ENCODE measurements at regions of chr9 and their contacts with region 1.

Region 1: DNA sequence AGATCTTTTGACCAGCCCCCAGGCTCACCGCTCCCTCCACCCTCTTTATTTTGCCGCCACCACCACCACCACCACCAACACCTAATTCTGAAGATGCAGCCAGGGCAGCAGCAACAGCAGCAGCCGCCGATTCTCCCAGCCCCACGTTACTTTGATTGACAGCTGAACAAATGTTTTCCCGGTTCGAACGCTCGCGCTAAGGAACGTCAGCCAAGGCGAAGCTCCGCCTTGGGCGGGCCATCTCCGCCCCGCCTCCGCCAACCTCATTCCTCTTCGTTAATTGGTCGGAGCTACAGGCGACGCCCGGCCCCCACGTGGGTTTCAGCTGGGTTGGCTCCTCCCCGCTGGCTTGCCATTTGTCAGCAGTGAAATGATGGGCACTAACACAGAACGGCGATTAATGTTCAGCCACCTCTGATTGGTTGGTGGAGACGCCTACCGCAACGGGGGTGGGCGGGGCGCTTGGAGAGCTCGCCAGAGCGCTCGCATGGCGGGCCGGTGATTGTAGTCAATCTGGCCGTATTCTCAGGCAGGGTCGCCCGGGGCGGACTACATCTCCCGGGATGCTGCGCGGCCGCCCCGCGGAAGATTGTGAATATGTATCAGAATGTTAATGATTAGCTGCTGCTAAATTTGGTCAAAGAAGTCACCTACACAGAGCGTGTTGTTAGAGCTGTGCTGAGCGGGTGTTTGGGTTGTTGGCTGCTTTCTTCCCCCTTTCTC is at the start of gene TLE4:
- DNase-seq: peak; percentile 100
- H3K4me3 ChIP-seq: peak within 1 kb of the TSS; percentile 93 to 98 (median 98)
- H3K4me3 Mint-ChIP-seq: peak within 1 kb of the TSS; percentile 76 to 91
- H3K27ac ChIP-seq: peak within 1 kb of the TSS; percentile 82 to 92
- H3K27ac Mint-ChIP-seq: peak within 1 kb of the TSS in 5 of 7 donors; percentile 76 to 87 (median 83)
- H3K4me1 ChIP-seq: peaks cover 50 to 55% of the 10 kb centered on the region in 2 donors
- H3K4me1 Mint-ChIP-seq: peaks cover 53% of the 10 kb centered on the region
- H3K27me3 ChIP-seq: peaks cover 0 to 4% of the 10 kb centered on the region in 2 donors
- H3K27me3 Mint-ChIP-seq: peaks cover 0 to 13% (median 11%) of the 10 kb centered on the region in 3 donors
- CTCF ChIP-seq: no peak
- polyA plus RNA-seq, gene TLE4: 21.0 to 107 (median 21.7) TPM

Region 2: DNA sequence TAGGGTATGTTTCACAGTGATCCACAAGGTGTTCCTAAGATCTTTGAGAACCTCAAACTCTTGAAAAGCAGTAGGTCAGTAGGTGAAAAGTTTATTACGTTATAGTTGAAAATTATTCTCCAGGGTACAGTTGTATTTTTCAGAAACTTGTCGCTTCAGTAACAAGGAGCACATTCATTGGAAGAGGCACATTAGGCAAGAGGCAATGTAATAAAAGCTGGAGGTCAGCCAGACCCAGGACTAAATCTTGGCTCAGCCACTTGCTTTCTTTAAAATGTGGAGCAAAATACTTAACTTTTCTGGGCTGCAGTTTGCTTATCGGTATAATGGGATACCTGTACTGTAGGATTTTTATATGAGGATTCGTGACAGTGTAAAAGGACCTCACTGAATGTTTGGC is 45.9 kb after region 1 on chr9:
- intact Hi-C with region 1: loop called in 1 of 2 experiments (anchors 5 kb)
- DNase-seq: no peak
- H3K4me3 ChIP-seq: no peak overlapping the region
- H3K4me3 Mint-ChIP-seq: no peak overlapping the region
- H3K27ac ChIP-seq: peak overlapping the region in 1 of 2 donors; percentile 29
- H3K27ac Mint-ChIP-seq: peak overlapping the region in 3 of 7 donors; percentile 31 to 74 (median 59)
- H3K4me1 ChIP-seq: peaks cover 53 to 61% of the 10 kb centered on the region in 2 donors
- H3K4me1 Mint-ChIP-seq: peaks cover 66% of the 10 kb centered on the region
- H3K27me3 ChIP-seq: no peaks in the 10 kb centered on the region
- H3K27me3 Mint-ChIP-seq: peaks cover 0 to 1% (median 0%) of the 10 kb centered on the region in 3 donors
- CTCF ChIP-seq: no peak

Region 3: GRCh38 chr9:79623799-79624721 is 52.6 kb after region 1 on chr9:
- intact Hi-C with region 1: loop called (anchors 2 to 5 kb)
- DNase-seq: peak; percentile 87 to 94 (median 90)
- H3K4me3 ChIP-seq: peak overlapping the region in 2 of 3 experiments; percentile 20 to 64
- H3K4me3 Mint-ChIP-seq: peak overlapping the region; percentile 56 to 75
- H3K27ac ChIP-seq: peak overlapping the region; percentile 66 to 88
- H3K27ac Mint-ChIP-seq: peak overlapping the region; percentile 91 to 99 (median 97)
- H3K4me1 ChIP-seq: peaks cover 32 to 51% of the 10 kb centered on the region in 2 donors
- H3K4me1 Mint-ChIP-seq: peaks cover 52% of the 10 kb centered on the region
- H3K27me3 ChIP-seq: no peaks in the 10 kb centered on the region
- H3K27me3 Mint-ChIP-seq: no peaks in the 10 kb centered on the region
- CTCF ChIP-seq: no peak

Region 4: DNA sequence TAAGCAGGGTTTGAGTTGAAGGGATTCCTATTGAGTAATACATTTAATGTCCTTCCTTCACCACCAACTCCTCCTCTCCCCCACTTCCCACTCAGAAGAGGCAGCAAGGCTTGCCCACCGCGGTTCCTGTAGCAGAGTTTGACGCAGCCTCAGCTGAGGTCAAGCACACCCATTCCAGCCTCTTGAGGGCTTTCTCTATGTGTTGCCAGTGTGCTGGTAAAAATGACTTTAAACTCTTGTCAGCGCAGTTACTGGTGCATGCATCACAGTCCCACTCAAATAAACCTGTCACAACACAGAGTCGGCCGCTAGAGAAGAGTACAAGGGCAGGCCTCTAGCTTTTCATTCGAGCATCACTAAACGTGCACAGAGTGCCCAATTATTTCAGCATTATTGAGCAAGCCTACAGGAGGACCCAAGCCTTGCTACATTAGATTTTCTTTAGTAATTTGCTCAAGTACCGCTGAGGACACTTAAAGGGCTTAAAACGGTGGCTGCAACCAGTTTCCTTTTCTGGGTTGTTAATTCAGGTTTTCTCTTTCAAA is 79.9 kb after region 1 on chr9:
- intact Hi-C with region 1: loop called in 1 of 2 experiments (anchors 5 kb)
- DNase-seq: peak; percentile 61 to 70 (median 69)
- H3K4me3 ChIP-seq: peak overlapping the region in 1 of 3 experiments; percentile 43
- H3K4me3 Mint-ChIP-seq: peak overlapping the region; percentile 56 to 75
- H3K27ac ChIP-seq: peak overlapping the region; percentile 56 to 71
- H3K27ac Mint-ChIP-seq: peak overlapping the region; percentile 87 to 96 (median 94)
- H3K4me1 ChIP-seq: peaks cover 20 to 26% of the 10 kb centered on the region in 2 donors
- H3K4me1 Mint-ChIP-seq: peaks cover 20% of the 10 kb centered on the region
- H3K27me3 ChIP-seq: no peaks in the 10 kb centered on the region
- H3K27me3 Mint-ChIP-seq: no peaks in the 10 kb centered on the region
- CTCF ChIP-seq: no peak

Region 5: GRCh38 chr9:79701651-79702050 is 130.2 kb after region 1 on chr9:
- intact Hi-C with region 1: loop called (anchors 5 kb)
- DNase-seq: peak; percentile 89 to 96 (median 93)
- H3K4me3 ChIP-seq: no peak overlapping the region
- H3K4me3 Mint-ChIP-seq: no peak overlapping the region
- H3K27ac ChIP-seq: peak overlapping the region in 1 of 2 donors; percentile 81
- H3K27ac Mint-ChIP-seq: peak overlapping the region; percentile 86 to 96 (median 95)
- H3K4me1 ChIP-seq: peaks cover 20 to 22% of the 10 kb centered on the region in 2 donors
- H3K4me1 Mint-ChIP-seq: peaks cover 43% of the 10 kb centered on the region
- H3K27me3 ChIP-seq: no peaks in the 10 kb centered on the region
- H3K27me3 Mint-ChIP-seq: peaks cover 0 to 1% (median 0%) of the 10 kb centered on the region in 3 donors
- CTCF ChIP-seq: no peak